Naive thymus-derived CD4-positive, alpha-beta T cell (primary cell): ENCODE measurements at regions of chr15 and their contacts with region 1.

Region 1: DNA sequence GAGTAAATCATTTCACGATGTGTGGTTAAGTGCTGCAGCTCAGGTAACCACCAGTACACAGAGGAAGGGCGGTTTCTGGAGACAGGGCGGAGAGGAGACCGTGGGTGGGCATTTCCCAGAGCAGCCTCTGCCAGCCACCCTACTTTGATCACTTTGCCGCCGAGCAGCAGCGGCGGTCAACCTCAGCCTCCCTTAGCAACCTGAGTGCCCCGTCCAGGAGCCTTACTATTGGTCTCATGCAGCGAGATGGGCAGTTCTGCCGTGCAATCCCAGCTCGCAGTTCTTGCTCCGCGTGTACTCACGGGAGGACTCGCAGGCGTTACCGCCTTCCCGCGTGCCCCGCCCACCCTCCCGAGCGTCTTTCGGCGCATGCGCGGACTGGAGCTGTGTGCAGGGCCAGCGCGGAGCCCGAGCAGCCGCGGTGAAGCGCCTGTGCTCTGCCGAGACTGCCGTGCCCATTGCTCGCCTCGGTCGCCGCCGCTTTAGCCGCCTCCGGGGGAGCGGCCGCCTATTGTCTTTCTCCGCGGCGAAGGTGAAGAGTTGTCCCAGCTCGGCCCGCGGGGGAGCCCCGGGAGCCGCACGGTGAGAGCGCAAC is at the start of gene AKAP13:
- DNase-seq: peak; percentile 78 to 93 (median 88)
- ATAC-seq: peak; percentile 87
- H3K4me3 ChIP-seq: peak within 1 kb of the TSS; percentile 62
- H3K4me3 Mint-ChIP-seq: peak within 1 kb of the TSS; percentile 86 to 96 (median 92)
- H3K27ac ChIP-seq: peak within 1 kb of the TSS; percentile 79
- H3K27ac Mint-ChIP-seq: peak within 1 kb of the TSS; percentile 84 to 96 (median 94)
- H3K4me1 ChIP-seq: peaks cover 16 to 23% of the 10 kb centered on the region in 2 donors
- H3K4me1 Mint-ChIP-seq: peaks cover 29 to 65% (median 47%) of the 10 kb centered on the region in 7 donors
- H3K27me3 ChIP-seq: no peaks in the 10 kb centered on the region
- H3K27me3 Mint-ChIP-seq: peaks cover 0 to 2% (median 0%) of the 10 kb centered on the region in 5 donors
- total RNA-seq, gene AKAP13: 170 to 400 (median 241) TPM

Region 2: GRCh38 chr15:85296615-85297402 is 83.5 kb before region 1 on chr15:
- CTCF ChIA-PET with region 1: interaction called, 7 read pairs
- POLR2A ChIA-PET with region 1: interaction called, 4 read pairs
- intact Hi-C with region 1: loop called in 1 of 2 experiments (anchors 1 kb)
- DNase-seq: peak; percentile 19 to 79 (median 71)
- ATAC-seq: peak; percentile 98
- H3K4me3 ChIP-seq: peak overlapping the region; percentile 20
- H3K4me3 Mint-ChIP-seq: peak overlapping the region; percentile 5 to 78 (median 60)
- H3K27ac ChIP-seq: no peak overlapping the region
- H3K27ac Mint-ChIP-seq: peak overlapping the region in 2 of 9 donors; percentile 12 to 62
- H3K4me1 ChIP-seq: no peaks in the 10 kb centered on the region
- H3K4me1 Mint-ChIP-seq: peaks cover 7 to 22% (median 14%) of the 10 kb centered on the region in 7 donors
- H3K27me3 ChIP-seq: no peaks in the 10 kb centered on the region
- H3K27me3 Mint-ChIP-seq: peaks cover 0 to 1% (median 0%) of the 10 kb centered on the region in 5 donors

Region 3: GRCh38 chr15:85330901-85331588 is 49.3 kb before region 1 on chr15:
- CTCF ChIA-PET with region 1: interaction called, 6 read pairs
- POLR2A ChIA-PET with region 1: interaction called, 18 read pairs
- intact Hi-C with region 1: loop called (anchors 1 kb)
- DNase-seq: peak; percentile 12 to 71 (median 44)
- ATAC-seq: peak; percentile 70
- H3K4me3 ChIP-seq: peak overlapping the region; percentile 57
- H3K4me3 Mint-ChIP-seq: peak overlapping the region; percentile 88 to 100 (median 96)
- H3K27ac ChIP-seq: peak overlapping the region; percentile 65
- H3K27ac Mint-ChIP-seq: peak overlapping the region; percentile 74 to 97 (median 95)
- H3K4me1 ChIP-seq: peaks cover 18 to 24% of the 10 kb centered on the region in 2 donors
- H3K4me1 Mint-ChIP-seq: peaks cover 34 to 54% (median 47%) of the 10 kb centered on the region in 7 donors
- H3K27me3 ChIP-seq: no peaks in the 10 kb centered on the region
- H3K27me3 Mint-ChIP-seq: no peaks in the 10 kb centered on the region

Region 4: DNA sequence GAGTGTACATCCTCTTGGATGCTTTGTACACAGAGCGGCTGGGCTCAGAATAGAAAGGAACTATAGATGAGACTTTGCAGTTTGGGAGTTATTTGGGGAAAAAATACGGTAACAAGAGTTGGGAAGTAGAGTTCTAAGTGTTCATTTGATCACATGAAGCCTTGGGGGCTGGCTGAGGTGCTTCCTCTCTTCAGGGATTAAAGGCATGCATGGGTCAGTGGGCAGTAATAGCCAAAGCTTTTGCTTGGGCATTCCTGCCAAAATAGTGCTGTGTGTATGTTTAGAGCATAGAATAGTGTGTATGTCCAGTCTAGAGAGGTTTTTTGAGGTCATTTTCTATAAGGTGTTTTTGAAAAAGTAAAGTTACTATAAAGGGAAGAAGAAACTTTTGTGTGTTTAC is 12.9 kb after region 1 on chr15:
- CTCF ChIA-PET with region 1: no interaction called
- POLR2A ChIA-PET with region 1: interaction called, 9 read pairs
- intact Hi-C with region 1: loop called in 1 of 2 experiments (anchors 1 kb)
- DNase-seq: no peak
- ATAC-seq: no peak
- H3K4me3 ChIP-seq: no peak overlapping the region
- H3K4me3 Mint-ChIP-seq: peak overlapping the region in 2 of 10 donors; percentile 3 to 20
- H3K27ac ChIP-seq: no peak overlapping the region
- H3K27ac Mint-ChIP-seq: peak overlapping the region in 3 of 9 donors; percentile 5 to 64 (median 28)
- H3K4me1 ChIP-seq: peaks cover 0 to 5% of the 10 kb centered on the region in 2 donors
- H3K4me1 Mint-ChIP-seq: peaks cover 33 to 57% (median 50%) of the 10 kb centered on the region in 7 donors
- H3K27me3 ChIP-seq: no peaks in the 10 kb centered on the region
- H3K27me3 Mint-ChIP-seq: no peaks in the 10 kb centered on the region

Region 5: DNA sequence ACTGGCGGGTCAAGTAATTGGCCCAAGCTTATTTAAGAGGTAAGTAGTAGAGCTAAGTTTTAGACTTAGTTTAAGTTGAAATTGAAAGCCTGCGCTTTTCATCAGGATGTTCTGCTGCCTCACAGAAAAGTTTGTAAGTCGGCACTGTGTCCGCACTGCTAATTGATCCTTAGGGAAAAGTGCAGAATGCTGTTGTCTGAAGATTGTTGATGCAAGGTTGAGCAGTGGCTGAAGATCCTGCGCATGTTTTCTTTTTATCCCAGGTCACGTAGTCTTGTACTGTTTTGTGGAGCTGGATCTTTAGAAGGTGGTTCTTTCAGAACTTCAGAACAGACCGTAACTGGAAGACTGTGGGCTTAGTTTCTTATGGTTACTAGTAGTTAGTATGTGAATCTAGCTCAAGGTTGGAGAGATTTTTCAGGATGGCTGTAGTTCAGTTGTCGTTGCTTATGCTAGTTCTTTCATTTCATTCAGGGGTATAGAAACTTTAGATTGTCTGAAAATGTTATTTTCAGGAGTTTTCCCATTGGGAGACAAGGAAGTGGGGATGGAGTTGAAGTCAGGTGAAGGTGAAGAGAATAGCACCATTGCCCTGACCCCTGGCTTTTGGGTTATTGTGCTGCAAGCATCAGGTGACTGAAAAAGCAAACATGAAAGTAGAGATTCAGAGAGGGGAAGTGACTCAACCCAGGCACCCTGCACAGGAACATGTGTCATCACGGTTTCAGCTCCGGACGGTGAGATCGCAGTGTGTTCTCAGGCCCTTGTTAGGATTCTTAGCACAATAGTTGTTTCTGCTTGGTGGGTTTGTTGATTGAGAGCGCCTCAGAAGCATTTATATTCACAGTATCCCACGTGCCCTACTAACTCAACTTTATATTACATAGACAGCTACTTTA is 32.9 kb after region 1 on chr15:
- CTCF ChIA-PET with region 1: interaction called, 11 read pairs
- POLR2A ChIA-PET with region 1: interaction called, 23 read pairs
- intact Hi-C with region 1: loop called (anchors 1 kb)
- DNase-seq: peak; percentile 21 to 68 (median 43)
- ATAC-seq: peak; percentile 96
- H3K4me3 ChIP-seq: no peak overlapping the region
- H3K4me3 Mint-ChIP-seq: peak overlapping the region; percentile 18 to 81 (median 72)
- H3K27ac ChIP-seq: peak overlapping the region; percentile 47
- H3K27ac Mint-ChIP-seq: peak overlapping the region; percentile 71 to 91 (median 87)
- H3K4me1 ChIP-seq: peaks cover 26 to 29% of the 10 kb centered on the region in 2 donors
- H3K4me1 Mint-ChIP-seq: peaks cover 29 to 76% (median 63%) of the 10 kb centered on the region in 7 donors
- H3K27me3 ChIP-seq: no peaks in the 10 kb centered on the region
- H3K27me3 Mint-ChIP-seq: no peaks in the 10 kb centered on the region

Region 6: GRCh38 chr15:85702321-85703101 is 322.2 kb after region 1 on chr15:
- CTCF ChIA-PET with region 1: no interaction called
- POLR2A ChIA-PET with region 1: no interaction called
- intact Hi-C with region 1: loop called in 1 of 2 experiments (anchors 2 kb)
- DNase-seq: peak in 4 of 9 donors; percentile 16 to 52 (median 28)
- ATAC-seq: peak; percentile 45
- H3K4me3 ChIP-seq: peak overlapping the region; percentile 50
- H3K4me3 Mint-ChIP-seq: peak overlapping the region; percentile 35 to 89 (median 82)
- H3K27ac ChIP-seq: peak overlapping the region; percentile 78
- H3K27ac Mint-ChIP-seq: peak overlapping the region; percentile 88 to 98 (median 94)
- H3K4me1 ChIP-seq: peaks cover 52 to 74% of the 10 kb centered on the region in 2 donors
- H3K4me1 Mint-ChIP-seq: peaks cover 45 to 90% (median 80%) of the 10 kb centered on the region in 7 donors
- H3K27me3 ChIP-seq: no peaks in the 10 kb centered on the region
- H3K27me3 Mint-ChIP-seq: no peaks in the 10 kb centered on the region

Region 7: GRCh38 chr15:85810075-85810474 is 429.8 kb after region 1 on chr15:
- CTCF ChIA-PET with region 1: no interaction called
- POLR2A ChIA-PET with region 1: no interaction called
- intact Hi-C with region 1: no loop called
- DNase-seq: no peak
- ATAC-seq: no peak
- H3K4me3 ChIP-seq: no peak overlapping the region
- H3K4me3 Mint-ChIP-seq: no peak overlapping the region
- H3K27ac ChIP-seq: no peak overlapping the region
- H3K27ac Mint-ChIP-seq: no peak overlapping the region
- H3K4me1 ChIP-seq: no peaks in the 10 kb centered on the region
- H3K4me1 Mint-ChIP-seq: peaks cover 0 to 4% (median 0%) of the 10 kb centered on the region in 7 donors
- H3K27me3 ChIP-seq: no peaks in the 10 kb centered on the region
- H3K27me3 Mint-ChIP-seq: peaks cover 0 to 2% (median 0%) of the 10 kb centered on the region in 5 donors

Region 8: DNA sequence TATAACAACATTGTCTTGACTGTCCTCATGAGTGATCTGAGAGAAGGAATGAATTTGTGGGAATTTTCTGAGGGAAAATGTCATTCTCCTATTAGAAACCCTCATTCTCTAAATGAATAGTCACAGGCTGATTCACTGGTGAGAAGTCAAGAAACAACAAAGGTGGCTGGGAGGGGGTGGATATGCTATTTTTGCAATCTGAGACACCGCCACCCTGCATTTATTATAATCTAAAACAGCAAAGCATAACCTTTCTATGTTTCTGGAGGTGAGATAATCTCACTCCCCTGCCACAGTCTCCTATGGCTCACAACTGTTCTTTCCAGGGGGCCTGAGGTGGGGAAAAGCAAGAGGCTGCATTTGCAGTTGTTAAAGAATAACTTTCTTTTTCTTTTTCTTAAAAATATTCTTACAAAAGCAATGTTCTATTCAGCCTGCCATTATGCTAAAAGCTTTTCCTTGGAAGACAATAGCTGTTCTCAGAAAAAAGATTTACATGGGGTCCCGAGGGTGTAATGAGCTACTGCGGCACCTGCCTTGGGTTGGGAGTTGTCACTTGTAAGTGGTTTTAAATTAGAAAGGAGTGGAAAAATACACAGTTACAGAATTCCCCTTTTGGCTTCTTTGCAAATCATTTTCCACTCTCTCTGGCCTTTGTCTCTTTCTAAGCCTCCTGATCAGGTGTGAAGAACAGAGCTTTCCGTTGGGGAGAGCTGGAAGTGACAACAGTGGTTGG is 920.2 kb after region 1 on chr15:
- CTCF ChIA-PET with region 1: no interaction called
- POLR2A ChIA-PET with region 1: no interaction called
- intact Hi-C with region 1: no loop called
- DNase-seq: no peak
- ATAC-seq: no peak
- H3K4me3 ChIP-seq: no peak overlapping the region
- H3K4me3 Mint-ChIP-seq: no peak overlapping the region
- H3K27ac ChIP-seq: no peak overlapping the region
- H3K27ac Mint-ChIP-seq: no peak overlapping the region
- H3K4me1 ChIP-seq: no peaks in the 10 kb centered on the region
- H3K4me1 Mint-ChIP-seq: no peaks in the 10 kb centered on the region
- H3K27me3 ChIP-seq: no peaks in the 10 kb centered on the region
- H3K27me3 Mint-ChIP-seq: peaks cover 0 to 16% (median 9%) of the 10 kb centered on the region in 5 donors